GM13976 (cell line): ENCODE measurements at regions of chr4 and their contacts with region 1.

Region 1: GRCh38 chr4:24488399-24489164 is 95.8 kb downstream of the DHX15 start:
- DNase-seq: peak; percentile 80
- CTCF ChIP-seq: peak; percentile 89

Region 2: GRCh38 chr4:24657768-24658617 is 169.4 kb after region 1 on chr4:
- in situ Hi-C with region 1: no loop called
- DNase-seq: peak; percentile 32
- CTCF ChIP-seq: no peak

Region 3: DNA sequence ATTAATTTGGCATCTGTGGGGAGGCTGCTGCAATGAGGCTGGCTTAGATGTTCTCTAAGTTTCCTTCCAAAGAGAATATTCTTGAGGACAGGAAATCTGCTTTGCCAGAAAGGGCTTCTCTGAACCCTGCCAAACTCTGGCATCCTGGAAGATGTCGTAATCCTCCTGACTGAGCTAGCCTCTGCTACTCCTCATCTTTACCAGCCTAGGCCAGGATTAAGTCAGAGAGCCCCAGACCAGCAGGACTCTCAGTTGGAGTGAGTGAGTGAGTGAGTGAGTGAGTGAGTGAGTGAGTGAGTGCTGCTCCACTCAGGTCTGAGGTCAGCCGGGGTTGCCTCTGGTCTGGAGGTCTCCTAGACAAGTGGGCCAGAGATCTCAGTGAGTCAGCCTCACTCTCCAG is 201.9 kb after region 1 on chr4:
- in situ Hi-C with region 1: loop called (anchors 10 kb)
- DNase-seq: no peak
- CTCF ChIP-seq: no peak

Region 4: DNA sequence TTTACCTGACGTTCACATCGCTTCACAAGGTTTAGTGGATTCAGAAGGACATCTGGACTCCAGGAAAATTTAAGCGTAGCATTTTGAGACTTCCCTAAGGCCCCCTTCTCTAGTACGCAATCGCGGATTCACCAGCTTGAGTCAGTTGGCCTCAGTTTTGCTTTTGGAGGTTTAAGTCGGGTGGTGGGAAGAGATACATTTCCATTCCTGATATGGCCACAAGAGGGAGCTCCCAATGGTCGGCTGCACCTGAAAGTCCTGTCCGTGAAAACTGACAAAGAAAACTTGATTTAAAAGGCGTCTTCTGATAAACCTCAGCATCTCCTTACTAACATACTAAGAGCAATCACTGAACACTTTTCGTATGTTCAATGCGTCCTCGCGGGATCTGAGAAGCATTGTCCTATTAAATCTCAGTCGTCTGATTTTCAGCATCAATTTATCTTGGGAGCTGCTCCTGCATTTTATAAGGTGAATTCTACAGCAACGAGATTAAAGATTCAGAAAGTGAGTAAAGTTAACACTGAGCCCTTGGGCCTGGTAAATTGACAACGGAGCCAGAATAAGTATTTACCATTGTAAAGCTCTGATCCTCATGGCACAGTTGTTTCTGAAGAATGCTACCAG is 491.6 kb after region 1 on chr4:
- in situ Hi-C with region 1: loop called (anchors 25 kb)
- DNase-seq: peak; percentile 59
- CTCF ChIP-seq: peak; percentile 79

Region 5: GRCh38 chr4:25144870-25145481 is 656.4 kb after region 1 on chr4:
- in situ Hi-C with region 1: loop called (anchors 25 kb)
- DNase-seq: peak; percentile 34
- CTCF ChIP-seq: peak; percentile 18